Gastrocnemius medialis (tissue), 4 donors: ENCODE measurements at regions of chr21 and their contacts with region 1.

Region 1: DNA sequence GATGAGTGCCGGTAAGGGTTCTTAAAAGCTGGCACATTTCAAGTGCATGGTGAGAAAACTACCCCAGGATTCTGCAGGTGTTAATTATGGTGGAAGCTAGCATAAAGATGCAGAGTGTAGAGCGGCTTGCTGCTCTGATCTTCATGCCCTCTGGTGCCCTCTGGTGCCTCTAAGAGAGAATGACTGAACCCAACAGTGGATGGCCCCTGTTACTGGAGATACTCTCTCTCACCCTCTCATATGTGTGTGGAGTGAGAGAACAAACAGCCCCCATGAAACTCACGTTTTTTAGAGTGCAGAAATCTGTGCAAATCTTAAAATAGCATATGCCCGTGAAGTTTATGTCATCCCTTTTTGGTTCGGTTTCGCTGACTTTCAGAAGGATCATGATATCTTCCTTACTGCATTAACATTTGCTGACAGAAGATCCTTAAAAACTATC is 90.0 kb downstream of the GRIK1 start:
- DNase-seq: peak in 1 of 2 donors; percentile 15
- ATAC-seq: peak in 1 of 2 donors; percentile 73
- H3K4me3 ChIP-seq: no peak overlapping the region
- H3K27ac ChIP-seq: no peak overlapping the region
- H3K4me1 ChIP-seq: no peaks in the 10 kb centered on the region
- H3K27me3 ChIP-seq: no peaks in the 10 kb centered on the region
- CTCF ChIP-seq: peak in 3 of 5 experiments; percentile 39 to 56 (median 49)
- POLR2A ChIP-seq: no peak

Region 2: GRCh38 chr21:28805885-28806284 is 1043.9 kb before region 1 on chr21:
- in situ Hi-C with region 1: no loop called
- intact Hi-C with region 1: no loop called
- DNase-seq: no peak
- ATAC-seq: peak in 1 of 2 donors; percentile 42
- H3K4me3 ChIP-seq: no peak overlapping the region
- H3K27ac ChIP-seq: no peak overlapping the region
- H3K4me1 ChIP-seq: no peaks in the 10 kb centered on the region
- H3K27me3 ChIP-seq: no peaks in the 10 kb centered on the region
- CTCF ChIP-seq: no peak
- POLR2A ChIP-seq: no peak

Region 3: DNA sequence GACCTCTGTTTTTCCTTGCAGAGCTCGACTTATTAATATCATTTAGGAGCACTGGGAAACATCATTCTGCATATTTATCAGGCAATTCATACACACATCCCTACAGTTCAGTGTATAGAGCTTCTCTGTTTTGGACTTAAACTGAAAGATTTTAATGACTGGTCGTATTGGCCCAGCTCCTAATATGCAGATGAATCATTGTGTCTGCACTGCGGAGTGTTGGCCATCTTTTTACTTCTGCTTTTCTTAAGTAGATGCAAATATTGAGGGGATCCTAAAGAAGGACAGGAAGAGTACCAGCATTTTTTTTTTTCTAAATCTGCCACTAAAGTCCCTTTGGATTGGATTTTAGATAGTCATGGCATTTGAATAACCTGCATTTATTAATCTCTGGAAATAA is 396.2 kb before region 1 on chr21:
- in situ Hi-C with region 1: loop called in 1 of 4 experiments (anchors 25 kb)
- intact Hi-C with region 1: no loop called
- DNase-seq: no peak
- ATAC-seq: no peak
- H3K4me3 ChIP-seq: no peak overlapping the region
- H3K27ac ChIP-seq: no peak overlapping the region
- H3K4me1 ChIP-seq: no peaks in the 10 kb centered on the region
- H3K27me3 ChIP-seq: no peaks in the 10 kb centered on the region
- CTCF ChIP-seq: no peak
- POLR2A ChIP-seq: no peak

Region 4: GRCh38 chr21:29477941-29478340 is 371.8 kb before region 1 on chr21:
- in situ Hi-C with region 1: loop called (anchors 10 to 25 kb)
- intact Hi-C with region 1: no loop called
- DNase-seq: no peak
- ATAC-seq: no peak
- H3K4me3 ChIP-seq: no peak overlapping the region
- H3K27ac ChIP-seq: no peak overlapping the region
- H3K4me1 ChIP-seq: no peaks in the 10 kb centered on the region
- H3K27me3 ChIP-seq: no peaks in the 10 kb centered on the region
- CTCF ChIP-seq: no peak
- POLR2A ChIP-seq: no peak

Region 5: DNA sequence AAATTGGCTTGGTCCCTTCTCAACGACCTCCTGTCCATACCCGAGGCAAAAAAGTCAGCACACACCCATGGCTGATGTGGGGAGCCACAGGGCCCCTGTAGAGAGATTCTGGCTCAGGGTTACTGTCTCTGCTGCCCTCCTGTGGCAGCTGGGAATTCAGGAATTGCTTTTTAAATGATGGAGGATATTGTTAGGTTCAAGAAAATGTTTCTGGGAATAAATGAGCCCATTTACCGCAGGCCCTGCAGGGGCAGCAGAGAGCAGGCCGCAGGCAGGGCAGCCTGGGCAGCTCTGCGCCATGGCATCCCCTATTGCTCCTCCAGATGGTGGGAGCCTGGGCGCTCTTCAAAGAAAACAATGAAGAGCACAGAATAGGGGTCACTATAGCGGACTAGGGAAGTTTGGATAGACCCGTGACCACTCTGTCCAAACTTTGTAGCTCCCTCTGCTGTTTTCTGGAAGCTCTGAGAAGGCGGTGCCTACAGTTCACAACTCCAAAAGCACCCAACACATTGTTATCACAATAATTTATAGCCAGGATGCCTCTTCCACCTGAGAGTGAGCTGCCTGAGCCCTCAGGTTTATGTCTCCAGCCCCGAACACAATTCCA is 349.9 kb before region 1 on chr21:
- in situ Hi-C with region 1: loop called in 1 of 4 experiments (anchors 25 kb)
- intact Hi-C with region 1: no loop called
- DNase-seq: no peak
- ATAC-seq: no peak
- H3K4me3 ChIP-seq: no peak overlapping the region
- H3K27ac ChIP-seq: no peak overlapping the region
- H3K4me1 ChIP-seq: no peaks in the 10 kb centered on the region
- H3K27me3 ChIP-seq: no peaks in the 10 kb centered on the region
- CTCF ChIP-seq: peak in 1 of 5 experiments; percentile 36
- POLR2A ChIP-seq: no peak

Region 6: DNA sequence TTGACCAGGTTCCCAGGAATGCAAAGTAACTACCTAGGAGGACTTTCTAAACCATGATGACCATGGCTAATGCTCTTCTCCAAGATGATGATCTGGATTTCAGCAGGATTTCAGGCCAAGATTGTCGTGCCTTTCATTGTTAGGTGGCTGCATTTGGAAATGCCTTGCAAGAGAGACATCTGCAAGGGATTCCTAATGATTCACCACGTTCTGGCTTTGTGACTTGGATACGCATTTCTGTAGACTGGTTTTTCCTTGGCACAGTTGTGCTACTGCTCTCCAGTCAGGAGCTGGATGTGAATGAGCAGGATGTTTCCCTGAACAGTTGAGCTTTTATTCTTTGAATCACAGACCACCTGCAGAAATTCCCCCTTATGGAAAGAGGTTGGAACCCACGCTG is 338.7 kb before region 1 on chr21:
- in situ Hi-C with region 1: no loop called
- intact Hi-C with region 1: no loop called
- DNase-seq: no peak
- ATAC-seq: no peak
- H3K4me3 ChIP-seq: no peak overlapping the region
- H3K27ac ChIP-seq: no peak overlapping the region
- H3K4me1 ChIP-seq: no peaks in the 10 kb centered on the region
- H3K27me3 ChIP-seq: no peaks in the 10 kb centered on the region
- CTCF ChIP-seq: no peak
- POLR2A ChIP-seq: no peak